Esophagus squamous epithelium (tissue), 5 donors: ENCODE measurements at regions of chr3 and their contacts with region 1.

Region 1: GRCh38 chr3:64030741-64031140 is 7.4 kb upstream of the PSMD6 start:
- DNase-seq: no peak
- H3K4me3 ChIP-seq: peak overlapping the region in 3 of 4 donors; percentile 28 to 60 (median 28)
- H3K27ac ChIP-seq: no peak overlapping the region
- H3K4me1 ChIP-seq: peaks cover 0 to 16% (median 0%) of the 10 kb centered on the region in 3 donors
- H3K27me3 ChIP-seq: peaks cover 0 to 10% (median 0%) of the 10 kb centered on the region in 4 donors
- CTCF ChIP-seq: peak; percentile 64 to 94 (median 92)
- POLR2A ChIP-seq: no peak

Region 2: DNA sequence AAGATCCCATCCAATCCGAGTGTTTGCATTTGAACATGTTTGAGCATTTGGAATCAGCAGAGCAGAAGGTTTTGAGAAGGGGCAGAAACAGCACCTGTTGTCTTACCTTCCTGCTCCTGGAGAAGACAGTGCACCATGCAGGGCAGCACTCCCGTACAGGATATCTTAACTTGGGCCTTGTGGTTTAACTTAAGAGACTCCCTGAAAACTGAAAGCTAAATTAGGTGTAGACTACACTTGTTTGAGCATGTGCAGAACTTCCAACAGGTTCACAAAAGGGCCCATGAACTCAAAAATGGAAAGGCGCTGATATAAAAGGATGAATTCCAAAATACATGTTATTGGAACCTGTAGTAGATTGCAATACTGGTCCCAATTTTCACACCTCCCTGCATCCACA is 370.0 kb after region 1 on chr3:
- intact Hi-C with region 1: loop called (anchors 5 kb)
- DNase-seq: no peak
- H3K4me3 ChIP-seq: no peak overlapping the region
- H3K27ac ChIP-seq: no peak overlapping the region
- H3K4me1 ChIP-seq: no peaks in the 10 kb centered on the region
- H3K27me3 ChIP-seq: no peaks in the 10 kb centered on the region
- CTCF ChIP-seq: no peak
- POLR2A ChIP-seq: no peak

Region 3: DNA sequence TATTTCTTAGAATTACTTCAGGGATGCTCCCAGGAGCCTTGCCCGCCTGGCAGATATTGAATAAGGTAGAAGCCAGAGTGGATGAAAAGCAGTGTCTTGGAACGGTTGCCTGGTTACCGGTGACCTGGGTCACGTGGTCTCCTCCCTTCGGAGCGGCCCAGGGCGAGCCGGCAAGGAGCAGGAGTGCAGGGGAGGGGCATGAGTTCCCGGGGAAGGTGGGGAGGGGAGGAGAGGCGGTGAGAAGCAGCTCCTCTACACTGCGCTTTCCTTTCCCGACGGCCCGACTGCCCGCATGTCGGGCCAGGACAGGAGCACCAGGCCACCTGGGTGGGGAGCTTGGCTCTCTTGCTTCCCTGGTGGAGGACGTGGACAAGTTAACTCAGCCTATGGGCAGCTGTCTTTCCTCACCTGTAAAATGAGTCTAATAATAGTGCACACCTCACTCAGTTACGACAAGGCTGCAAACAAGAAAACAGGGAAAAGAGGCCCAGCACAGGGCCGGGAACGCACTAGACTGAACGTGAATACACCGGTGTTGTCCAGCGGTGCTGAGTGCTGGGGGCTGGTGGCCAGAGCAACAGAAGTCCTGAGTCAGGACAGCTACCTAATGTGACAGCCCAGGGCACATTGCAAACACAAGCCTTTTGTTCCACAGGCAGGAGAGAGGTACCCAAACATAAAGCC is 458.8 kb after region 1 on chr3:
- intact Hi-C with region 1: loop called (anchors 5 kb)
- DNase-seq: no peak
- H3K4me3 ChIP-seq: peak overlapping the region in 2 of 4 donors; percentile 13 to 19
- H3K27ac ChIP-seq: no peak overlapping the region
- H3K4me1 ChIP-seq: peaks cover 0 to 17% (median 0%) of the 10 kb centered on the region in 3 donors
- H3K27me3 ChIP-seq: peaks cover 0 to 22% (median 0%) of the 10 kb centered on the region in 4 donors
- CTCF ChIP-seq: no peak
- POLR2A ChIP-seq: no peak